Upper lobe of right lung (tissue), 1 donor: ENCODE measurements at regions of chr12 and their contacts with region 1.

Region 1: GRCh38 chr12:10759657-10760056 is 36.5 kb upstream of the YBX3 start:
- DNase-seq: no peak
- ATAC-seq: no peak
- H3K4me3 ChIP-seq: no peak overlapping the region
- H3K27ac ChIP-seq: no peak overlapping the region
- H3K4me1 ChIP-seq: no peaks in the 10 kb centered on the region
- H3K27me3 ChIP-seq: no peaks in the 10 kb centered on the region
- CTCF ChIP-seq: no peak

Region 2: DNA sequence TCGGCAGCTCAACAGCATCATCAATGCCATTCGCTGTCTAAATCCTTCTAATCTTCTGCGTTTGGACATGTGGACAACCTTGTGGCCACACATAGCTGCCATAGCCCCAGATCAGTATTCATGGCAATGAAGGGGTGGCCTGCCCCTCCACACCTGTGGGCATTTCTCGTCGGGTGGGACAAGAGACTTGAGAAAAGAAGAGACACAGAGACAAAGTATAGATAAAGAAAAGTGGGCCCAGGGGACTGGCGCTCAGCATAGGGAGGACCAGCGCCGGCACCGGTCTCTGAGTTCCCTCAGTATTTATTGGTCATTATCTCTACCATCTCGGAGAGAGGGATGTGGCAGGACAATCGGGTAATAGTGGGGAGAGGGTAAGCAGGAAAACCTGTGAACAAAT is 188.5 kb before region 1 on chr12:
- intact Hi-C with region 1: no loop called
- DNase-seq: no peak
- ATAC-seq: no peak
- H3K4me3 ChIP-seq: no peak overlapping the region
- H3K27ac ChIP-seq: no peak overlapping the region
- H3K4me1 ChIP-seq: no peaks in the 10 kb centered on the region
- H3K27me3 ChIP-seq: no peaks in the 10 kb centered on the region
- CTCF ChIP-seq: no peak

Region 3: DNA sequence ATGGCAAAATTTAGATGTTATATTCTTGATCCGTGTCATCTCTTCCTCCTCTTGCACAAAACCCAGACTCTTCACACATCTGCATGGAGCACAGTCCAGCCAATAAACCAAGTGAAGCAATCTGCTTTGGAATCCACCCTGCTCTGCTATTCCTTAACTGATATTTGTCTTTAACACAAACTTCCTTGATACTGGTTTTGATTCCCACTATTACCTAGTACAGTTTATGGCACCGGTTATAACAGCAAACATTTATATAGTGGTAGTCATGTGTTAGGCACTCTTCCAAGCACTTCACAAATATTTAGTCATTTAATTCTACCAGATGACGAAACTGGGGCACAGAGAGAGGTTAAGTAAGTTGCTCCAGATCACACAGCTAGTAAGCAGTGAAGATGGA is 98.3 kb before region 1 on chr12:
- intact Hi-C with region 1: no loop called
- DNase-seq: no peak
- ATAC-seq: peak; percentile 21
- H3K4me3 ChIP-seq: no peak overlapping the region
- H3K27ac ChIP-seq: no peak overlapping the region
- H3K4me1 ChIP-seq: no peaks in the 10 kb centered on the region
- H3K27me3 ChIP-seq: no peaks in the 10 kb centered on the region
- CTCF ChIP-seq: no peak

Region 4: DNA sequence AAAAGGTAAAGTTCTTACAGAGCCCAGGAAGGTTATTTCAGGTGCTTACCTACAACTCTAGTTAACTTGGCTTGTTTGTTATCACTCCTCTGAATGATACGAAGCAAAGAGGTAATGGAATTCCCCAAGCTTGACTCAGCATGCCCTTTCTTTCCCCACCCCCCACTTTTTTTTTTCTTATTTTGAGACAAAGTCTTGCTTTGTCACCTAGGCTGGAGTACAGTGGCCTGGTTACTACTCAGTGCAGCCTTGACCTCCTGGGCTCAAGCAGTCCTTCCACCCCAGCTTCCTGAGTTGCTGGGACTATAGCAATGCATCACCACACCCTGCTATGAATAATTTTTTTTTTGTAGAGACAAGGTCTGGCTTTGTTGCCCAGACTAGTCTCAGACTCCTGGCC is 19.5 kb before region 1 on chr12:
- intact Hi-C with region 1: no loop called
- DNase-seq: no peak
- ATAC-seq: no peak
- H3K4me3 ChIP-seq: no peak overlapping the region
- H3K27ac ChIP-seq: no peak overlapping the region
- H3K4me1 ChIP-seq: no peaks in the 10 kb centered on the region
- H3K27me3 ChIP-seq: peaks cover 4% of the 10 kb centered on the region
- CTCF ChIP-seq: no peak

Region 5: GRCh38 chr12:11264506-11264905 is 504.8 kb after region 1 on chr12:
- intact Hi-C with region 1: no loop called
- DNase-seq: no peak
- ATAC-seq: no peak
- H3K4me3 ChIP-seq: no peak overlapping the region
- H3K27ac ChIP-seq: no peak overlapping the region
- H3K4me1 ChIP-seq: no peaks in the 10 kb centered on the region
- H3K27me3 ChIP-seq: no peaks in the 10 kb centered on the region
- CTCF ChIP-seq: no peak

Region 6: GRCh38 chr12:11486623-11487444 is 727.2 kb after region 1 on chr12:
- intact Hi-C with region 1: loop called (anchors 10 kb)
- DNase-seq: peak; percentile 77
- ATAC-seq: peak; percentile 97
- H3K4me3 ChIP-seq: no peak overlapping the region
- H3K27ac ChIP-seq: no peak overlapping the region
- H3K4me1 ChIP-seq: no peaks in the 10 kb centered on the region
- H3K27me3 ChIP-seq: peaks cover 5% of the 10 kb centered on the region
- CTCF ChIP-seq: peak; percentile 97